Activated naive CD4-positive, alpha-beta T cell treated with anti-CD3 and anti-CD28 coated beads for 36 hours (primary cell): ENCODE measurements at regions of chrX and their contacts with region 1.

Region 1: DNA sequence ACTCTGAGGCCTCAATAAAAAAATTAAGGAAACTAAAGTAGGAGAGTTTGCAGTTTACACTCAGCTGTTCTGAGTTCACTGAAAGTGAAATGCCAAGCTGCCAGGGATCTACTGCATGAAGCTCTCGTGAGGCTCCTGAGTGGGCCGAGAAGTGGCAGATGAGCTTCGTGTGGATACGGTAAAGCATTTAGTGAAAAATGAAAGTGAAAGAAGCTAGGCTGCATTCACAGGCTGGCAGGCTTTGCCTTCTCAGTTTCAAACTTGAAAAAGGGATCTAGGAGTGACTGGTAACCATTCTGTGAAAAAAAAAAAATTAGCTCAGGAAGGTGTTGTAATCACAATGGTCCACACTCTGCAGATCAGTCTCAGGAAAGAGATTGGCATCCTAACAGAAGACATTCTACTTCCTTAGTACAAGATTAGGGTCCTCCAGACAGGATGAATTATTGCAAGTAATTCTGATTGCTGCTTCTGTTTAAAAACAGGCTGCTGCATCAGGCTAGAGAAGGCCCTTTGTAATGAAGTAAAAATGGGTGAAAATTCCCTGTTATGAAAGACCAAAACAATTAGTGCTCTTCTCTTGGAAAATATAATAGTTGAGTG is 679.9 kb downstream of the RPA4 start:
- DNase-seq: peak; percentile 51
- H3K4me3 Mint-ChIP-seq: peak overlapping the region; percentile 48
- H3K27ac Mint-ChIP-seq: peak overlapping the region; percentile 61
- H3K4me1 Mint-ChIP-seq: peaks cover 15% of the 10 kb centered on the region
- H3K27me3 Mint-ChIP-seq: no peaks in the 10 kb centered on the region

Region 2: DNA sequence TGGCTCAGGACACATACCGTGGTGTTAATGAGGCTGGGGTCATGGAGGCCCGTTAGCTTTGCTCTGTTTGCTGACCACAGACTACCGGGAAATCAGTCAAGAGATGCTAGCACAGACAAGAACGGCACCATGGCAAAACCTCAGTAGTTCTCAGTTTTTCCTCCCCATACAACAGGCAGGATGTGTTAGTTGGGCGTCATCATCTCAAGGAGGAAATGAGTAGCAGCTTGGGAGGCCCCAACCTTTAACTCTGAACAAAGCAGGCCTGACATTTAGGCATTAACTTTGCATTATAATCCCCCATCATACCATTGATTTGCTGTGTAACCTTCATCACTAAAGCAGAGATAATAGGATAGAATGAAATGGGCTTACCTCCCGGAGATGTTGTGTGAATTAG is 34.3 kb after region 1 on chrX:
- CTCF ChIA-PET with region 1: no interaction called
- intact Hi-C with region 1: loop called (anchors 1 kb)
- DNase-seq: peak; percentile 46
- H3K4me3 Mint-ChIP-seq: peak overlapping the region; percentile 19
- H3K27ac Mint-ChIP-seq: peak overlapping the region; percentile 77
- H3K4me1 Mint-ChIP-seq: peaks cover 8% of the 10 kb centered on the region
- H3K27me3 Mint-ChIP-seq: no peaks in the 10 kb centered on the region